A549 (cell line): ENCODE measurements at regions of chr1 and their contacts with region 1.

Region 1: GRCh38 chr1:20633190-20634064 is at the start of gene PINK1:
- DNase-seq: peak; percentile 50 to 76
- ATAC-seq: peak; percentile 91 to 92
- H3K4me3 ChIP-seq: peak within 1 kb of the TSS; percentile 100
- H3K27ac ChIP-seq: peak within 1 kb of the TSS; percentile 92
- H3K4me1 ChIP-seq: peaks cover 18% of the 10 kb centered on the region
- CTCF ChIP-seq: peak; percentile 89
- EP300 ChIP-seq: no peak
- POLR2A ChIP-seq: peak; percentile 26; the same call in 1 of the 2 replicates
- RAD21 ChIP-seq: peak; percentile 65 to 69
- polyA plus RNA-seq, gene PINK1: 18.9 and 19.9 TPM in 2 replicates

Region 2: GRCh38 chr1:20521960-20522861 is 111.2 kb before region 1 on chr1:
- CTCF ChIA-PET with region 1: interaction called, 101 read pairs
- POLR2A ChIA-PET with region 1: no interaction called
- DNase-seq: peak; percentile 36 to 72
- ATAC-seq: peak; percentile 87 to 91
- H3K4me3 ChIP-seq: no peak overlapping the region
- H3K27ac ChIP-seq: peak overlapping the region; percentile 39 to 67; a peak in 3 of 6 replicates
- H3K4me1 ChIP-seq: no peaks in the 10 kb centered on the region
- CTCF ChIP-seq: peak; percentile 86
- EP300 ChIP-seq: no peak
- POLR2A ChIP-seq: no peak
- RAD21 ChIP-seq: peak; percentile 91 to 95

Region 3: DNA sequence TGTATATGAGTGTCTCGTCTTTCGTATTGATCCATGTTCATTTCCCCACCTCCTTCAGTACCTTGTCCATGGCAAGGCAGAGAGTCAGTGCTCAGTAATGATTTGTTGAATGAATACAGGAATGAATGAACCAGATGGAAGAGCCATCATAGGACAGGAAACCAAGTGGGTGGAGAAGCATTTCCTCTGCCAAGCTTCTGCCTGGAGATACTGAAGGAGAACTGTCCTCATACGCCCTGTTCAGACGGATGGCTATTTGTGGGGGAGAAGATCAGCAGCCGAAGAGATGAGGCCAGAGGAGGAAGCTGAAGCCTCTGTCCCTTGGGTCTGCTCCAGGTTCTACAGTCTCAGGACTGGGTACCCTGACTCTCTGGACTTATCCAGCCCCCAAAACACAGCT is 75.2 kb before region 1 on chr1:
- CTCF ChIA-PET with region 1: interaction called, 11 read pairs
- POLR2A ChIA-PET with region 1: interaction called, 7 read pairs
- DNase-seq: no peak
- ATAC-seq: no peak
- H3K4me3 ChIP-seq: no peak overlapping the region
- H3K27ac ChIP-seq: no peak overlapping the region
- H3K4me1 ChIP-seq: no peaks in the 10 kb centered on the region
- CTCF ChIP-seq: no peak
- EP300 ChIP-seq: no peak
- POLR2A ChIP-seq: no peak
- RAD21 ChIP-seq: no peak

Region 4: GRCh38 chr1:20589331-20590278 is 43.8 kb before region 1 on chr1:
- CTCF ChIA-PET with region 1: interaction called, 17 read pairs
- POLR2A ChIA-PET with region 1: no interaction called
- DNase-seq: no peak
- ATAC-seq: peak; percentile 35 to 53; a peak in 3 of 6 replicates
- H3K4me3 ChIP-seq: peak overlapping the region; percentile 50
- H3K27ac ChIP-seq: peak overlapping the region; percentile 84 to 92
- H3K4me1 ChIP-seq: peaks cover 47% of the 10 kb centered on the region
- CTCF ChIP-seq: no peak
- EP300 ChIP-seq: no peak
- POLR2A ChIP-seq: no peak
- RAD21 ChIP-seq: no peak

Region 5: DNA sequence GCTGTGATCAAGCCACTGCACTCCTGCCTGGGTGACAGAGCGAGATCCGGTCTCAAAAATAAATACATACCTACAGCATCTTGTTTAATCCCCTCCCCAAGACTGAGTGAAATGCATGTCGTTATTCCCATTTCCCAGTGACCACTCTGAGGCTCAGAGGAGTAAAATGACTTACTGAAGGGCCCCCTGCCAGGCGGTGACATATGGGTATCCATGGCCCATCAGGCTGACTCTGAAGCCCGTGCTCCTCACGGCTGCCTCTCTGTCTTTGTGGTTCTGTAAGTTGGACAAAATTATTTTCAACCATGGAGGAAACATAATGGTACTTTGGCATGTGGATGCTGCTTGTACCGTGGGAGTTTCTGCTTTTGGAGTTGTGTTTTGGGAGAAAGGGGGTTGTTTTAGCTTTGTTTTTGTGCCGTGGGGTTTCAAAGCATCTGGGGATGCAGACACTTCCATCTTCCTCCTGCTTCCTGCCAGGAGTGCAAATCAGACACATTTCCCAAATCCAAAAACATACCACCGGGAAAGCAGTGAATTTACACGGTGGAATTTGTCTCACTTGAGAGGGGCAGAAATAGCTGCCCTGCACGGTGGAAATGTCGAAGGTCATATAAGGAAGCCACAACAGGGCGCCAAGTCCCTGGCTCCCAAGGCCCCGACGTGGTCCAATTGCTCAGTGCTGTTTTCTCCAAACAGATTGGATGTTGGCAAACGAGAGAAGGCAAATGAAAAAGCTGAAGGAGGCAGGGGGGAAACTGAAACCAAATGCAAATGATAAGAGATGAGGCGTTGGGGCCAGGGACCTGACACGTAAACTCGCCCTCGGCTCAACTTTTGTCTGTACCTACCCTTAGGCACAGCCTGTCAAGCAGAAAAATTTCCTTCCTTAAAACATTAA is 17.2 kb before region 1 on chr1:
- CTCF ChIA-PET with region 1: interaction called, 43 read pairs
- POLR2A ChIA-PET with region 1: no interaction called
- DNase-seq: no peak
- ATAC-seq: no peak
- H3K4me3 ChIP-seq: no peak overlapping the region
- H3K27ac ChIP-seq: peak overlapping the region; percentile 40 to 93; a peak in 4 of 6 replicates
- H3K4me1 ChIP-seq: peaks cover 44% of the 10 kb centered on the region
- CTCF ChIP-seq: no peak
- EP300 ChIP-seq: no peak
- POLR2A ChIP-seq: no peak
- RAD21 ChIP-seq: no peak